ENCODE measurements at regions of chr20 and their contacts with region 1.

Region 1: GRCh38 chr20:9051508-9051907 is 17.4 kb upstream of the PLCB4 start:
- DNase-seq: peak; percentile 99
- ATAC-seq: peak; percentile 96
- H3K4me3 ChIP-seq: peak overlapping the region; percentile 44
- H3K27ac ChIP-seq: peak overlapping the region; percentile 79
- H3K4me1 ChIP-seq: peaks cover 30% of the 10 kb centered on the region
- H3K27me3 ChIP-seq: no peaks in the 10 kb centered on the region
- CTCF ChIP-seq: no peak

Region 2: DNA sequence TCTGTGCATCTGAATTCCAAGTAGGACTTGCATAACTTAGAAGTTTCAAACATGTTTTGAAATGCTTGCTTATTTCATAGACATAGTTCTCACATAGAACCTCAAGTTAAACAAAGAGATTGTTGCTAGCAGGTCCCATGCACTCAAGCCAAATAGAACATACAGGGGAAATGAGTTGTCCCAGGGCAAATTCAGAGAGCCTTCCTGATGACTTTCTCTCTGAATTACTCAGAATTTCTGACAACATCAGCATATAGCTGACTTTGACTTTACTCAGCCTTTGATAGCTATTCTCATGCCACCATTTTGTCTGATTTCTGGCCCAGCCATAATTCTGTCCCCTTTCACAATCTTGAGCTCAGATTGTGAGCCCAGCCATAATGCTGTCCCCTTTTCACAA is 315.8 kb before region 1 on chr20:
- CTCF ChIA-PET with region 1: no interaction called
- POLR2A ChIA-PET with region 1: no interaction called
- intact Hi-C with region 1: no loop called
- DNase-seq: no peak
- ATAC-seq: no peak
- H3K4me3 ChIP-seq: no peak overlapping the region
- H3K27ac ChIP-seq: no peak overlapping the region
- H3K4me1 ChIP-seq: no peaks in the 10 kb centered on the region
- H3K27me3 ChIP-seq: 0 out of 2 replicates have a peak, but pooled peaks cover 3% of the 10 kb centered on the region
- CTCF ChIP-seq: no peak

Region 3: DNA sequence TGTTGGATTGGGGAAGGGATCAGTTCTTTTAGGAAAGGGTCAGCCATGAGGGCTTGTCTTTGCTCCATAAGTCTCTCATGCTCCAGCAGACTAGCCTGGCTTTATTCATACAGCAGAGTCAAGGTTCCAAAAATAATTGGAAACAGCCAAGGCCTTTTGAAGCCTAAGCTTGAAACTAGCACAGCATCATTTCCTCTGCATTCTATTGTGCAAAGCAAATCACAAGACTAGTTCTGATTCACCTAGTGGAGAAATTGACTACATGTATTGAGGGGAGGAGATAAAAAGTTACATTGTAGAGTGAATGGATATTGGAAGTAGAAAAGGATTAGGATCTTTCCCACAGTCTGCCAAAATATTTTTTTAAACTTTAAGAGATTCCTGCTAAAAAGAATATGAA is 141.9 kb before region 1 on chr20:
- CTCF ChIA-PET with region 1: no interaction called
- POLR2A ChIA-PET with region 1: interaction called, 17 read pairs
- intact Hi-C with region 1: no loop called
- DNase-seq: no peak
- ATAC-seq: no peak
- H3K4me3 ChIP-seq: no peak overlapping the region
- H3K27ac ChIP-seq: no peak overlapping the region
- H3K4me1 ChIP-seq: no peaks in the 10 kb centered on the region
- H3K27me3 ChIP-seq: no peaks in the 10 kb centered on the region
- CTCF ChIP-seq: no peak

Region 4: GRCh38 chr20:8994045-8994444 is 57.5 kb before region 1 on chr20:
- CTCF ChIA-PET with region 1: no interaction called
- POLR2A ChIA-PET with region 1: no interaction called
- intact Hi-C with region 1: no loop called
- DNase-seq: no peak
- ATAC-seq: no peak
- H3K4me3 ChIP-seq: no peak overlapping the region
- H3K27ac ChIP-seq: no peak overlapping the region
- H3K4me1 ChIP-seq: no peaks in the 10 kb centered on the region
- H3K27me3 ChIP-seq: no peaks in the 10 kb centered on the region
- CTCF ChIP-seq: no peak

Region 5: DNA sequence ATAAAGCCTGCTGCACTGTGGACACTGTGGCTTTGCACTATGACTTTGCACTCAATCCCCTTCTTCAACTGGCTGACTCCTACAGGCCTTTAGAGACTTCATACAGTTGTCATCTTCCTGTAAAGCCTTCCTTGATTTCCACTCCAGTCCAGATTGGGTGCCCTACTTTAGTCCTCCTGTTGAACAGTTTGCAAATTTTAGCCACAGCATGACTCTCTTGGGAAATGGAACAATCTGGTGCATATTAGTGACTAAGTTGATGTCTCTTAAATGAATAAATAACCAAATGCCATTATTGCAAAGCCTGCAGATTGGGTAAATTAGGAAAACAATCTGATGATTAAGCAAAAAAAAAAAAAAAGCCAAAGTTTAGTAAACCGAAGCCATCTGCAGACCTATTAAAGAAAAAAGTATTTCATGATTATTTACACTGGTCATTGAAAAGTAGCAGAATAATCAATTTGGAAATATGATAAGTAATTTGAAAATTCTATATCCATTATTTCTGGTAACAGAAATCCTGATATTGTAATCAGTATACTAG is 30.0 kb after region 1 on chr20:
- CTCF ChIA-PET with region 1: no interaction called
- POLR2A ChIA-PET with region 1: no interaction called
- intact Hi-C with region 1: no loop called
- DNase-seq: no peak
- ATAC-seq: no peak
- H3K4me3 ChIP-seq: no peak overlapping the region
- H3K27ac ChIP-seq: no peak overlapping the region
- H3K4me1 ChIP-seq: no peaks in the 10 kb centered on the region
- H3K27me3 ChIP-seq: no peaks in the 10 kb centered on the region
- CTCF ChIP-seq: no peak